ENCODE measurements at regions of chr19 and their contacts with region 1.

Region 1: DNA sequence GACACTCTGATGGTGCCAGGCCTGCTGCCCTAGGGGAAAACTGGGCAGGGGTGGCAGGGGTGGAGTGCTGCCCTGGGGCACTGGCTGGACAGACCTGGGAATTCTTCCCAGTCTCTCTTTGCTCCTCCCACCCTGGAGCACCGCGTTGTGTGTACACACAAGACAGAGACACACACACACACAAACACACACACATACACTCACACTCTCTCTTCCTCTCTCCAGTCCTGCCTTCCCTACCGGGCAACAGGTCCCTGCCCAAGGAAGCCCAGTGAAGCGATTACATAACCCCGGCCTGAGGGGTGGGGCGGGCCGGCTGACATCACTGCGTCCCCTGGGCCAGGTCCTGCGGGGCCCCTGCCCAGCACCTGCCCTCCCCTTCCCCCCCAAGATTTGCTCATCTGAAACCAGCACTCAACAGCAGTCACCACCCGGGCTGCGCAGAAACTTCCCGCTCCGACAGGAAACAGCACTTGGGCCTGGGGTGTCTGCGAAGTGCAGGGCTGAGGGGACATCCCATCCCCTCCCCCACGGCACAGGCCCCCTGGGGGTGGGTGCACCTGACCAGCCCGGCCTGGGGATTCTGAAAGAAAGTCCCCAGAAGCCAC is 1.2 kb downstream of the MKNK2 start:
- DNase-seq: peak; percentile 92

Region 2: DNA sequence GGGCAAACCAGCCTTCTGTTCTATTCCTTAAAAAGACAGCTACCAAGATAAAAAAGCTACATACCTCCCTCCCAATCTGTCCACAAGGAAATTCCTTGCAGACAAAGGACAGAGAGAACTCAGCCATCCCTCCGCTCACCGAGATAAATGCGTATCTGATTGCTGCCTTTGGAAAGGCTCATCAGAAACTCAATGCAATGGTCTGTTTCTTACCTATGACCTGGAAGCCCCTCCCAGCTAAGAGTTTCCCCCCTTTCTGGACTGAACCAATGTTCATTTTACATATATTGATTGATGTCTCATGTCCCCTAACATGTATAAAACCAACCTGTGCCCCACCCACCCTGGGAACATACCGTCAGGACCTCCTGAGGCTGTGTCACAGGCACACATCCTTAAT is 46.0 kb before region 1 on chr19:
- intact Hi-C with region 1: loop called in 1 of 2 experiments (anchors 1 kb)
- DNase-seq: no peak

Region 3: GRCh38 chr19:2021453-2022140 is 28.2 kb before region 1 on chr19:
- intact Hi-C with region 1: loop called in 1 of 2 experiments (anchors 2 kb)
- DNase-seq: no peak